ENCODE measurements at regions of chr5 and their contacts with region 1.

Region 1: GRCh38 chr5:177546258-177546741 is 8.1 kb downstream of the FAM193B start:
- DNase-seq: peak; percentile 82
- ATAC-seq: peak; percentile 89
- H3K4me3 ChIP-seq: no peak overlapping the region
- H3K27ac ChIP-seq: peak overlapping the region; percentile 69
- H3K4me1 ChIP-seq: peaks cover 32% of the 10 kb centered on the region
- H3K27me3 ChIP-seq: no peaks in the 10 kb centered on the region
- CTCF ChIP-seq: 0 out of 2 replicates have a peak, but pooled peaks have one; percentile 11

Region 2: DNA sequence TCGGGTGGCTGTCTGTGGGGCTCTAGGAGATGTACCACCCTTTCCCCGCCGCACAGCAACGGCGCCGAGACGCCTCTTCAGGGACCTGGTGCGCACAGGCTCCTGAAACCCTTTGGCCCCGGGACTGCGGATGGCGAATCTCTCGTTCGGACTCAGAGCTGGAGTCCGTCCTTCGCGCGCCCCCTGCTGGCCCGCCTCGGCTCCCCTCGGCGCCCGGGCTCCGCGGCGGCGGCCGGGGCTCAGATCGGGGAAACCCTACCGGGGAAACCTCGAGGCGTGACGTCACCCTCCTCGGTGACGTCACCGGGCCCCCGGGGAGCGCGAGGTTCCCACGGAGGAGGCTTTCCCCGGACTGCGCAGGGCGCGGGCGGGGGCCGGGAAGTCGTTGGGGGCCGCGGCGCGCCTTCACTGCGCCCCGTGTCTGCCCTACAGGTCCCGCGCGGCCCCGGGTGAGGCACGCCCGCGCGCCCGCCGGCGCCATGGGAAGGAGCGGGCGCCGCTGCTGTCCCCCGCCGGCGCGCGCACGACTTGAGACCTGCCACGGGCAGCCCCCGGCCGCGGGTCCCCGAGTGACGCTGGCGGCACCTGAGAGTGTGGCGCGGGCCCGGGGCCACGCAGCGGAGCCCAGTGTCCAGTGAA is 91.8 kb before region 1 on chr5:
- CTCF ChIA-PET with region 1: no interaction called
- POLR2A ChIA-PET with region 1: no interaction called
- in situ Hi-C with region 1: no loop called
- intact Hi-C with region 1: no loop called
- DNase-seq: peak; percentile 57
- ATAC-seq: peak; percentile 68
- H3K4me3 ChIP-seq: peak overlapping the region; percentile 50 to 61
- H3K27ac ChIP-seq: peak overlapping the region; percentile 78; the same call in 1 of the 2 replicates
- H3K4me1 ChIP-seq: peaks cover 41% of the 10 kb centered on the region
- H3K27me3 ChIP-seq: no peaks in the 10 kb centered on the region
- CTCF ChIP-seq: peak; percentile 95

Region 3: DNA sequence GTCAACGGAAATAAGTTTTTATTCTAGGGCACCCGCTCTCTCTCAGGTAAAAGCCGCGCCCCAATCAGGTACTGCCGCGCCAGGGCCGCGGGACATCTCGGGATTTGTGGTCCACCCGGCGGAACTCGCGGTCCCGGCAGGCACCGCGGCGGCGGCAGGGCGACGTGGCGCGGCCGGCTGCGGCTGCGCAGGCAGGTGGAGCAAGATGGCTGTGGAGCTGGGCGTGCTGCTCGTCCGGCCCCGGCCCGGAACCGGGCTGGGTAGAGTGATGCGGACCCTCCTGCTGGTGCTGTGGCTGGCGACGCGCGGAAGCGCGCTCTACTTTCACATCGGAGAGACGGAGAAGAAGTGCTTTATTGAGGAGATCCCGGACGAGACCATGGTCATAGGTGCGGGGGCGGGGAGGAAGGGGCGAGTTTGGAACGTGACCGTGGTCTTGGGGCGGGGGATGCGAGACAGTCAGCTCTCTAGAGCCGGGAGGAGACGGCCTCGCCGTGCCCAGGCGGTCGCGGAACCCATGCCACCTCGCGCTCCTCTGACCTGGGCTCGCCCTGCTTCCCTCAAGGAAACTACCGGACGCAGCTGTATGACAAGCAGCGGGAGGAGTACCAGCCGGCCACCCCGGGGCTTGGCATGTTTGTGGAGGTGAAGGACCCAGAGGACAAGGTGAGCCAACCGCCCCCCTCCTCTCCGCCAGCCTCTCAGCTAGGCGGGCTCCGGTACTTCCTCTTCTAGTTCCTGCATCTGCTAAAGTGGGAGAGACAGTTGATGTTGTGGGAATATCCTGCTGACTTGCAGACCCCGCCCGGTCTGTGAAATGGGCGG is 45.9 kb after region 1 on chr5 and contains the start of gene TMED9:
- CTCF ChIA-PET with region 1: no interaction called
- POLR2A ChIA-PET with region 1: no interaction called
- in situ Hi-C with region 1: loop called (anchors 10 kb)
- intact Hi-C with region 1: no loop called
- DNase-seq: no peak
- ATAC-seq: peak; percentile 99
- H3K4me3 ChIP-seq: peak within 1 kb of the TSS; percentile 82 to 91
- H3K27ac ChIP-seq: peak within 1 kb of the TSS; percentile 83
- H3K4me1 ChIP-seq: no peaks in the 10 kb centered on the region
- H3K27me3 ChIP-seq: peaks cover 8% of the 10 kb centered on the region; the same call in 1 of the 2 replicates
- CTCF ChIP-seq: no peak
- total RNA-seq, gene TMED9: 293 TPM

Region 4: DNA sequence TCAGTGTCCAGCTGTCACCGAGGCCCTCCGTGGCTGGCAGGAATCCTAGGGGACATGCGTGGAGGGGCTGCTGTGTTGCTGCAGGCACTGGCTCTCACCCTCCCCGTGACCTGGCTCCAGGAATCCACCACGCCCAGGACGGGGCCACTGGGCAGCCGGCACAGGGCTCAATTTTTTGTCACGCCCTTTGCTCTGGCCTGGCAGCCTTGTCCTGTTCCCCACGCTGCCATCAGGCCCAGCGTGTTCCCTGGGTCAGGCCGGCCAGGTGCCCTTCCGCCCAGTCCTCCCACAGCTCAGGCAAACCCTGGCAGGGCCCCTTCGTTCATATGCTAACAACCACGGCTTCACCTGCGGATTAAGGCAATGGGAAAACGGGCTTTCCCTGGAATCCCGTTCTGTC is 412.4 kb after region 1 on chr5:
- CTCF ChIA-PET with region 1: no interaction called
- POLR2A ChIA-PET with region 1: no interaction called
- in situ Hi-C with region 1: no loop called
- intact Hi-C with region 1: no loop called
- DNase-seq: no peak
- ATAC-seq: no peak
- H3K4me3 ChIP-seq: no peak overlapping the region
- H3K27ac ChIP-seq: no peak overlapping the region
- H3K4me1 ChIP-seq: no peaks in the 10 kb centered on the region
- H3K27me3 ChIP-seq: no peaks in the 10 kb centered on the region
- CTCF ChIP-seq: no peak

Measured in Panc1 (cell line).